Dendritic cell treated with granulocyte-macrophage colony-stimulating factor and Interleukin-4, amounts not matched to agents 40 ng/mL and 50 ng/mL, for 4 days (primary cell): ENCODE measurements at regions of chr1 and their contacts with region 1.

Region 1: GRCh38 chr1:201154389-201155165 is at the start of gene TMEM9:
- H3K4me3 Mint-ChIP-seq: peak within 1 kb of the TSS; percentile 82
- H3K27ac Mint-ChIP-seq: peak within 1 kb of the TSS; percentile 82
- H3K4me1 Mint-ChIP-seq: peaks cover 12% of the 10 kb centered on the region
- H3K27me3 Mint-ChIP-seq: peaks cover 6% of the 10 kb centered on the region

Region 2: DNA sequence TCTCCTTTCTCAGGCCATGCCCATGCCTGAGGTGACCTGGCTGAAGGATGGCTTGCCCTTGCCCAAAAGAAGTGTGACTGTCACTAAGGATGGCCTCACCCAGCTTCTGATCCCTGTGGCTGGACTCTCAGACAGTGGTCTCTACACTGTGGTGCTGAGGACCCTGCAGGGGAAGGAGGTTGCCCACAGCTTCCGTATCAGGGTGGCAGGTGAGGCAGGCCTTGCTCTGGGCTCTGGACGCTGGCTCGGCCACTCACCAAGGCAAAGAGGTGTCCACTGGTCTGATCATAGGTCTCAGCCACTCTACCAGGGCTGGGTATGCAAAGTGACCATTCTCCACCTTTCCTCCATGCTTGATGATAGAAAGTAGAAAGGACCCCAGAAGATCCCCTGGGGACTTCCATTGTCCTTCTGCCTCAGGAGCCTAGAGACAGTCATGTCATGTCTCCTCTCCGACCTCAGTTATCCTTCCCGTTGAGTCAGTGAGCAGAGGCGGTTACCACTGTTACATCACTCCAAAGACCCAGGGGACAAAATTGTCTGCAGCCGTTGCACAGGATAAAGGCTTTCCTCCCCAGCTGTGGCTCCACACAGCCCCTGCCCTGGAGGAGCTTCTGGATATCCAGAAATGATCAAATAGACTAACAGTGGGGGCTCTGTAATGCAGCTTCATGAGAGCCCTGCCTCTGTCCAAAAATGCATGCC is 70.2 kb after region 1 on chr1:
- intact Hi-C with region 1: loop called (anchors 5 kb)
- H3K4me3 Mint-ChIP-seq: no peak overlapping the region
- H3K27ac Mint-ChIP-seq: no peak overlapping the region
- H3K4me1 Mint-ChIP-seq: no peaks in the 10 kb centered on the region
- H3K27me3 Mint-ChIP-seq: no peaks in the 10 kb centered on the region